Dorsolateral prefrontal cortex (tissue), 120 donors: ENCODE measurements at regions of chr5 and their contacts with region 1.

Region 1: GRCh38 chr5:148746826-148747535 is 79.4 kb upstream of the ADRB2 start:
- DNase-seq: no peak
- H3K4me3 ChIP-seq: no peak overlapping the region
- H3K27ac ChIP-seq: no peak overlapping the region
- H3K27me3 ChIP-seq: no peaks in the 10 kb centered on the region
- CTCF ChIP-seq: no peak

Region 2: DNA sequence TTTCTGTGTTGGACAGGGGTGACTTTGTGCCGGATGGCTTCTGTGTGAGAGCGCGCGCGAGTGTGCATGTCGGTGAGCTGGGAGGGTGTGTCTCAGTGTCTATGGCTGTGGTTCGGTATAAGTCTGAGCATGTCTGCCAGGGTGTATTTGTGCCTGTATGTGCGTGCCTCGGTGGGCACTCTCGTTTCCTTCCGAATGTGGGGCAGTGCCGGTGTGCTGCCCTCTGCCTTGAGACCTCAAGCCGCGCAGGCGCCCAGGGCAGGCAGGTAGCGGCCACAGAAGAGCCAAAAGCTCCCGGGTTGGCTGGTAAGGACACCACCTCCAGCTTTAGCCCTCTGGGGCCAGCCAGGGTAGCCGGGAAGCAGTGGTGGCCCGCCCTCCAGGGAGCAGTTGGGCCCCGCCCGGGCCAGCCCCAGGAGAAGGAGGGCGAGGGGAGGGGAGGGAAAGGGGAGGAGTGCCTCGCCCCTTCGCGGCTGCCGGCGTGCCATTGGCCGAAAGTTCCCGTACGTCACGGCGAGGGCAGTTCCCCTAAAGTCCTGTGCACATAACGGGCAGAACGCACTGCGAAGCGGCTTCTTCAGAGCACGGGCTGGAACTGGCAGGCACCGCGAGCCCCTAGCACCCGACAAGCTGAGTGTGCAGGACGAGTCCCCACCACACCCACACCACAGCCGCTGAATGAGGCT is 79.2 kb after region 1 on chr5 and contains the start of gene ADRB2:
- intact Hi-C with region 1: loop called (anchors 5 kb)
- DNase-seq: peak; percentile 49 to 91 (median 84)
- H3K4me3 ChIP-seq: peak within 1 kb of the TSS; percentile 42 to 86 (median 67)
- H3K27ac ChIP-seq: peak within 1 kb of the TSS in 50 of 59 donors; percentile 2 to 89 (median 72)
- H3K27me3 ChIP-seq: peaks cover 0 to 8% (median 0%) of the 10 kb centered on the region in 45 donors
- CTCF ChIP-seq: peak in 11 of 56 donors; percentile 4 to 28 (median 9)
- total RNA-seq, gene ADRB2: 1.1 to 6.1 (median 2.8) TPM